ENCODE measurements at regions of chr9 and their contacts with region 1.

Region 1: GRCh38 chr9:124617471-124618141 is 110.4 kb upstream of the NR5A1 start:
- DNase-seq: no peak
- H3K4me3 ChIP-seq: no peak overlapping the region
- CTCF ChIP-seq: peak; percentile 88

Region 2: GRCh38 chr9:124126571-124127289 is 490.9 kb before region 1 on chr9:
- CTCF ChIA-PET with region 1: no interaction called
- POLR2A ChIA-PET with region 1: no interaction called
- DNase-seq: no peak
- H3K4me3 ChIP-seq: no peak overlapping the region
- CTCF ChIP-seq: peak; percentile 99

Region 3: GRCh38 chr9:124562328-124562727 is 55.3 kb before region 1 on chr9:
- CTCF ChIA-PET with region 1: interaction called, 25 read pairs
- POLR2A ChIA-PET with region 1: no interaction called
- DNase-seq: no peak
- H3K4me3 ChIP-seq: no peak overlapping the region
- CTCF ChIP-seq: no peak

Region 4: DNA sequence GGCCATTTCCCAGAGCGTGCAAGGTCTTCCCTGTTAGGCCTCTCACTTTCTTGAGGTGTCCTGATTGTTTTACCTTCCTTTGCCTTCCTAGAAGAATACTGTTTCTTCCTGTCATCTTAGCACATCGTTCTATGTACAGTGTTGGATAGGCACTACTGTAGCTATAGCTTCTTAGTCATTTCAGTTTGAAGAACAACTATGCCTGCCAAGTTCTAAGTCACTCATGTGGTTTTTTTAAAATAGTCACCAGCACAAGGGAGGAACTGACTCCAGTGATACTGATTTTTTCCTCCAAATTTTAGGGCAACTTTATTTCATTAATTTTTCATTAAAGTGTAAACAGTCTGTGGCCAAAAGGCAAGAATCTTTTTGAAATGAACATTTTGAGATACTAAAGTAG is 12.0 kb after region 1 on chr9:
- CTCF ChIA-PET with region 1: interaction called, 82 read pairs
- POLR2A ChIA-PET with region 1: no interaction called
- DNase-seq: no peak
- H3K4me3 ChIP-seq: no peak overlapping the region
- CTCF ChIP-seq: no peak

Region 5: GRCh38 chr9:124676159-124676551 is 58.5 kb after region 1 on chr9:
- CTCF ChIA-PET with region 1: interaction called, 12 read pairs
- POLR2A ChIA-PET with region 1: no interaction called
- DNase-seq: no peak
- H3K4me3 ChIP-seq: no peak overlapping the region
- CTCF ChIP-seq: no peak

Region 6: GRCh38 chr9:124721109-124721906 is 103.7 kb after region 1 on chr9:
- CTCF ChIA-PET with region 1: interaction called, 395 read pairs
- POLR2A ChIA-PET with region 1: no interaction called
- DNase-seq: no peak
- H3K4me3 ChIP-seq: no peak overlapping the region
- CTCF ChIP-seq: no peak

Region 7: GRCh38 chr9:124771021-124771866 is 153.6 kb after region 1 on chr9 and contains the start of gene NR6A1:
- CTCF ChIA-PET with region 1: interaction called, 97 read pairs
- POLR2A ChIA-PET with region 1: no interaction called
- DNase-seq: peak; percentile 63
- H3K4me3 ChIP-seq: peak within 1 kb of the TSS; percentile 65
- CTCF ChIP-seq: peak; percentile 35

Measured in AG04449 (cell line).